AG04450 (cell line): ENCODE measurements at regions of chr3 and their contacts with region 1.

Region 1: DNA sequence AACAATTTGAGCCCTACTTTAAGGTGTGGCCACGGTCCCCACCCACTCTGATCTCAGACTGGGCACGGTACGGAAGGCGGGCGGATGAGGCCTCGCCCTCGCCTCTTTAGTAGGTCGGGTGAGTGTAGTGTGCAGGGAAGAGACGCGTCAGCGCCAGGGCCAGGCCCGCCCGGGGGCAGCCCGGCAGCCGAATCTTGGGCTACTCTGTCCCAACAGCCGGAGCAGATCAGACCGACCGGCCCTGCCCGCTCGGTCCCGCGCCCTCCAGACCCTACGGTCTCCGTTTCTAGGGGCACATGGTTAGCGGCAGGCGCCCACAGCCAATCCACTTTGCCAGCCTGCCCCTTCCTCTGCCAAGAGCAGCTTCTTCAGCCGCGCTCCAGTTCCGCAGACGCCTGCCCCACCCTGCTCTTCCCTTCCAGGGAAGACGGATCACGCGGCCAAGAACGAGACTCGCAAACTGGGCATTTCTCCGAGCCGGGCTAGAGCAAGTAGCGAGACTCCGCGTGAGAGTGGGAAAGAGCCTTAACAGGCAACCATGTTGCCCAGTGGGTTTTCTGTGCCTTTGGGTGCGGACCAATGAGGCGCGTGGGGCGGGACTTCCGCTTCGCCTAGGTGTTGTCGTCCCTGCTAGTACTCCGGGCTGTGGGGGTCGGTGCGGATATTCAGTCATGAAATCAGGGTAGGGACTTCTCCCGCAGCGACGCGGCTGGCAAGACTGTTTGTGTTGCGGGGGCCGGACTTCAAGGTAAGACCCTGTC is at the start of gene RNF13:
- DNase-seq: peak; percentile 86
- H3K4me3 ChIP-seq: peak within 1 kb of the TSS; percentile 86
- H3K27ac ChIP-seq: peak within 1 kb of the TSS; percentile 97
- H3K27me3 ChIP-seq: no peaks in the 10 kb centered on the region
- CTCF ChIP-seq: no peak
- polyA plus RNA-seq, gene RNF13: 31.4 and 46.3 TPM in 2 replicates

Region 2: DNA sequence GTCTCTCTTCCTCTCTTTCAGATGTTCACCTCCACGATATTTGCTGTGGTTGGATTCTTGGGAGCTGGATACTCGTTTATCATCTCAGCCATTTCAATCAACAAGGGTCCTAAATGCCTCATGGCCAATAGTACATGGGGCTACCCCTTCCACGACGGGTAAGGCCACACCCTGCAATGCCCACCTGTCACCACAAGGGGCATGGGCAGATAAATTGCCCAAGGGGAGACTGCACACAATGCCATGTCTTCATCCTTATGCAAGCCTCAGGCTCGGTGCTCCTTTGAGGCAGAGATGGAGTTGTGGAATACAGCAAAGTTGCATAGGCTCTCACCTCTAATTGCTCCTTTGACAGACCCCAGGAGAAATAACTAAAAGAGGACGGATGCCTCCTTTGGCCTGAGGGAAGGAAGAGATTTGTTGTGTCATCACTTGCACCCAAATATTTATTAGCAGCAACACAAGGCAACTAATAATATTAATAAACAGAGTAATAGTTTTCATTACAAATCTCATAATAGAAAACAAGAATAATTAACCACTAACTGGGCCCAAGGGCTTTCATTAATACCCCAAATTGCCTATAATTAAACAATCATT is 325.1 kb before region 1 on chr3:
- CTCF ChIA-PET with region 1: interaction called, 39 read pairs
- POLR2A ChIA-PET with region 1: no interaction called
- DNase-seq: no peak
- H3K4me3 ChIP-seq: no peak overlapping the region
- H3K27ac ChIP-seq: no peak overlapping the region
- H3K27me3 ChIP-seq: no peaks in the 10 kb centered on the region
- CTCF ChIP-seq: peak; percentile 31

Region 3: GRCh38 chr3:149536429-149536828 is 276.4 kb before region 1 on chr3:
- CTCF ChIA-PET with region 1: interaction called, 17 read pairs
- POLR2A ChIA-PET with region 1: no interaction called
- DNase-seq: no peak
- H3K4me3 ChIP-seq: no peak overlapping the region
- H3K27ac ChIP-seq: no peak overlapping the region
- H3K27me3 ChIP-seq: no peaks in the 10 kb centered on the region
- CTCF ChIP-seq: no peak

Region 4: GRCh38 chr3:149765762-149766334 is 46.9 kb before region 1 on chr3:
- CTCF ChIA-PET with region 1: interaction called, 400 read pairs
- POLR2A ChIA-PET with region 1: interaction called, 6 read pairs
- DNase-seq: no peak
- H3K4me3 ChIP-seq: no peak overlapping the region
- H3K27ac ChIP-seq: no peak overlapping the region
- H3K27me3 ChIP-seq: peaks cover 19% of the 10 kb centered on the region
- CTCF ChIP-seq: peak; percentile 68

Region 5: DNA sequence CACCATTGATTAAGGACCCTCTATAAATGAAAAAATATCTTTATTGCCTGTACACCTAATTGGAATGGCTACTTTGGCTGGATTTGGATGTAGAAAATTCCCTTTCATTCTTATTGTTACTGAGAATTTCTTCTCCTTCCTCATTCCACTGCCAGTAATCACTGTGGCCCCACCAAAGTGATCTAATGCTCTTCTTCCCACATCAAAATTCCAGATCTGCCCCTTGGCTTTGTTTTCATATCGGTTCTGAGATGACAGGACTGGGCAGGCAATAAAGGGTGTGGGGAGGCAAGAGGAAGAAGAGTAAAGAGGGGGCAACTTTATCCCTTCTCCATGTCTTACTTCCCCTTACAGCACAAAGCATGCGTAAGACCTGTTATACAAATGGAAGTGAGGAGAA is 22.5 kb before region 1 on chr3:
- CTCF ChIA-PET with region 1: interaction called, 30 read pairs
- POLR2A ChIA-PET with region 1: no interaction called
- DNase-seq: no peak
- H3K4me3 ChIP-seq: no peak overlapping the region
- H3K27ac ChIP-seq: no peak overlapping the region
- H3K27me3 ChIP-seq: no peaks in the 10 kb centered on the region
- CTCF ChIP-seq: no peak

Region 6: DNA sequence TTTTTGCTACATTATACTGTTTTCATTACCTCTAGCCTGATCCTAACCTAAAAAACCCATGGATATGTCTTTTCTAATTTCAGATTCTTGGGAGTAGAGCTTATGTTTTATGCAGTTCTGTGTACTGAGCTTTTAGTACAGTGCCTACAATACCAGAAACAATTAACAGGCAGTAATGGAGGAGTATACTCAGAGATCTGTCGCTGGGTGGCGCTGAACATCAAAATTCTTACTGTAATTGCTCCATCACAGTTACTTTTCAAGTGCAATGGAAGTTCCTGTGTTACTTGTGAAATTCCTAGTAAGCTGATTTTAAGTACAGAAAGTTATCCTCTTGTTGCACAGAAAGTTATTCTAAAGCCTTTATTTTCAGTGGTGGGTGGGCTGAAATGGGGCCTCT is 67.1 kb after region 1 on chr3:
- CTCF ChIA-PET with region 1: interaction called, 17 read pairs
- POLR2A ChIA-PET with region 1: no interaction called
- DNase-seq: peak; percentile 16
- H3K4me3 ChIP-seq: no peak overlapping the region
- H3K27ac ChIP-seq: no peak overlapping the region
- H3K27me3 ChIP-seq: no peaks in the 10 kb centered on the region
- CTCF ChIP-seq: peak; percentile 76